ENCODE measurements at regions of chr22 and their contacts with region 1.

Region 1: DNA sequence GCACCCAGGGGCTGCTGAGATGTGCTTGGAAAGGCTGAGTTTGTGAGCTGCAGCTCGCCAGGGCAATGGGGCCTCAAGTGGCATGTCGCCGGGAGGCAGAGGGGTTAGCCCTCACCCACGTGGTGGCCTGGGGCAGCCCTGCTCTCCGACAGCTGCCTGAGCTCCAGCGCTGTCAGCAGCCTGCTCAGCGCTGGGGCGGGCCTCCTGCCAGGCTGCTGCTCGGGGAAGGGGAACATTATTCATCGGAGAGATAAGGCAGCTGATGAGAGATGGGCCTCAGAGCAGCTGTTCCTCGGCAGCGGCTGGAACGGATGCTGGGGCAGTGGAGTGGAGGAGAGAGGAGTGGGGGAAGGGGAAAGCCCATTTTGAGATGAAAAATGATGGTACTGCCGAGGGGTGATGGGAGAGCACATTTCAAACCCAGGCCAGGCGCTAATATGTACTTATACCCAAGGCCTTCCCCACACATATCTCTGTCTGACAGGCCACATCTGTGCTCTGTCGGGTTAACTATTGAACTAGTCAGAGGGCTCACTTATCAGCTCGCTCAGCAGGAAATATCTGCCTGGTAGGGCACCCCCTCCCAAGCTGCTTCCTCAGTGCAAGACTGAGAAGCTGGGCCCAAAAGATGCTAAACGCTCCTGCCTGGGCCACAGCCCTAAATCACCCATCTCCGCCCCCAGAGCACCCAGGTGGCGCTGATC is 79.5 kb downstream of the TIMP3 start:
- DNase-seq: no peak

Region 2: DNA sequence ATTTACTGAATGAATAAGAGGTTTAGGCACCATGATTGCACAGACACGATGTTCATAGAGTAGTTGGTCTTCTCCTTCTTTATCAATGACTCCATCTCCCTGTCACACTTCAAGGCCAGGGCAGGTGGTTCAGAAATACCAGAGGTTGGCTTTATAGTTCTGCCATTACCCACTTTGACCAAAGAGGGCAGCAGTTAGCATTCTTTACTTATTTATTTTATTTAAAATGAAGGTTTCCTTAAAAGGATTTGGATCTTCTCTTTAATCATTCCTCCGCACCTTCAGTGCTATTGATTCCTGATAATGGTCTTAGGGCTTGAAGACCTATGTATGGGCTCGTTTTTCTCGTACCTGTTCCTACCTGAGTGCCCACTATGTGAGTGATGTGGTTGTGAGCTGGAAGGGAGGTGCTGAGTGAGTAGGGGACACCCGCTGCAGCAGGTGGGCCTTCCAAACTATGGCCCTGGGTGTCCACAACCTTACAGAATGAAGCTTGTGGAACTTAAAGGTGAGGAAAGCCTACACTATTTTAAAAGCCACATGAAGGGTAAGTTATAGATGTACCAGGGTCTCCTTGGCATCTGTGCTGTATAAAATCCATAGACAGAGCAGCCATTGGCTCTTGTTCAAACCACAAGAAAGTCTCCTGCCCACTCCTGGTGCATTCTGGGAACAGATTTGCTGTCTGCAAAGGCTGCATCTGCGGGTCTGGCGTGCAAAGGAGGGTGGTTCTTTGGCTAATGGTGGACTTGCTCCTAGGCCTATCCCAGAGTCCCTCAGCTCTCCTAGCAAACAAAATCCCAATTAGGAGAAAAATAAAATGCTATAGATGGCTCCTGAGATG is 44.5 kb before region 1 on chr22:
- in situ Hi-C with region 1: loop called (anchors 10 kb)
- DNase-seq: no peak

Region 3: DNA sequence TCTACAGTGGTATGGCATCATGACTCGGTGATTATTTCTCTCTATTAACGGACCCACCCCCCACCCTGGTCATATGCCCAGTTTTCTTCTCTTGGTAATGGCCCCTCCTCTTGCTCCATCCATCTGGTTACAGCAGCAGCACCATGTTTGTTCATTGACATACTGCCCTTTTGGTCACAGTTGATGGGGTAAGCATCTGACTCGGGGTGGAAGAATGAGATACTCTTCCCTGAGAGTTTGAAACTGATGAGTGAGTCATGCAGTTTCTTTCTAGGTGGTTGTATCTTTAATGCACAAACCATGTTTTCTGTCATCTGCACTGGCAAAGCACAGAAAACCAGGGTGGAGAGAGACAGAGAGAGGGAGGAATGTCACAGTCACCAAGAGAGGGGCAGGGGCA is 51.1 kb after region 1 on chr22:
- in situ Hi-C with region 1: no loop called
- DNase-seq: no peak